H1 (cell line): ENCODE measurements at regions of chr2 and their contacts with region 1.

Region 1: DNA sequence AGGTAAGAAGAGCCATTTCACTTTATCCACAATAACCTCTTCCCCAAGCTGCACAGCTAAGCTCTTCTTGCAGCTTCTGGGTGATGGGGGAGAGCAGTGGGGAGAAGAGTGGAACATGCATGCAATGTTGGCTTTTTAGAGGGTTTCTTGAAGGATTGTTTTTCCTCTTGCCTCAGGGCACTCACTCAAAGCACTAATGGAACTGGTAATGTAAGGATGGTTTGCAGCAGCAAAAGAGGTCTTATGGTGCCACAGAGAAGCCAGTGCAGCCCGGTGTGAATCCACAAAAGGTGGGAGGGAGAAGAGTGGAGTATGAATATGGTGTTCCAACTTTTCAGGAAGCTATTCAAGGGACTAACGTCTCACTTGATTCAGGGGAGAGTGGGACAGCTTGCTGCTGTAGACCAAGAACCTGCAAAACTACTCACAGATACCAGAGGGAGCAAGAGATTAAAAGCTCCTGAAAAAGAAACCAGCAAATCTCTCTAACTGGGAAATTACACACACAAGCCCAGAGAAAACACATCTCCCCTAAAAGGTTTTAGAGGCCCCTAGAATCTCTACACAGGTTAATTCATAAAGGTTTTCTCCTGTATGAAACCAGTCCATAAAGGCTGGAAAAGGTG is 116.4 kb downstream of the CHN1 start:
- DNase-seq: no peak
- H3K4me3 ChIP-seq: no peak overlapping the region
- H3K27ac ChIP-seq: no peak overlapping the region
- H3K4me1 ChIP-seq: peaks cover 0 to 9% (median 5%) of the 10 kb centered on the region in 4 experiments; a peak in 4 of 7 replicates
- H3K27me3 ChIP-seq: no peaks in the 10 kb centered on the region
- CTCF ChIP-seq: peak in 1 of 3 experiments; percentile 24; a peak in 1 of 4 replicates
- EP300 ChIP-seq: no peak
- POLR2A ChIP-seq: no peak
- RAD21 ChIP-seq: peak; percentile 21 to 51; a peak in 3 of 4 replicates

Region 2: DNA sequence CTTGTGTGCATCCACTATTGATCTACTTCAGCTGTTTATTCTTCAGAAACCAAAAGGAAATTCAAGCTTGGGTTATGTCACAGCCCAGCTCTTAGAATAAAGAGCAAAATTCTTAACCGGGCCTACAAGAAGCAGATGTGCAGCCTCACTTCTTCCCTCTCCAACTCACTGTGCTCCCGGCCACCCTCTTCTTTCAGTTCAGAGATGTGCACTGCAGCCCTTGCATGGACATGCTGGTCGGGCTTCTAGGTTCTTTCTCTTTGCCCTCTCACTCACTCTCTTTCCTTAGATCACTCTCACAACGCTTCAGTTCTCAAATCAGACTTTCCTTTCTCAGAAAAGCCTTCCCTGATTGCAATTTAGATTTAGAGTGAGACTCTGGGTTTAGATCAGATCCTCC is 12.3 kb after region 1 on chr2:
- CTCF ChIA-PET with region 1: interaction called, 10 read pairs
- POLR2A ChIA-PET with region 1: interaction called, 3 read pairs
- DNase-seq: no peak
- H3K4me3 ChIP-seq: no peak overlapping the region
- H3K27ac ChIP-seq: peak overlapping the region; percentile 51; the same call in 1 of the 2 replicates
- H3K4me1 ChIP-seq: peaks cover 0 to 3% (median 0%) of the 10 kb centered on the region in 4 experiments; a peak in 2 of 7 replicates
- H3K27me3 ChIP-seq: no peaks in the 10 kb centered on the region
- CTCF ChIP-seq: no peak
- EP300 ChIP-seq: no peak
- POLR2A ChIP-seq: no peak
- RAD21 ChIP-seq: no peak